ENCODE measurements at regions of chr13 and their contacts with region 1.

Region 1: GRCh38 chr13:23375001-23375971 is 58.2 kb downstream of the SACS start:
- DNase-seq: peak; percentile 86 to 96 (median 92)
- ATAC-seq: peak; percentile 95
- H3K4me3 ChIP-seq: peak overlapping the region; percentile 48
- H3K4me3 Mint-ChIP-seq: peak overlapping the region; percentile 71 to 82 (median 77)
- H3K27ac ChIP-seq: peak overlapping the region; percentile 75
- H3K27ac Mint-ChIP-seq: peak overlapping the region in 8 of 9 donors; percentile 44 to 94 (median 78)
- H3K4me1 ChIP-seq: peaks cover 21 to 26% of the 10 kb centered on the region in 2 donors
- H3K4me1 Mint-ChIP-seq: peaks cover 22 to 70% (median 67%) of the 10 kb centered on the region in 7 donors
- H3K27me3 ChIP-seq: no peaks in the 10 kb centered on the region
- H3K27me3 Mint-ChIP-seq: no peaks in the 10 kb centered on the region

Region 2: DNA sequence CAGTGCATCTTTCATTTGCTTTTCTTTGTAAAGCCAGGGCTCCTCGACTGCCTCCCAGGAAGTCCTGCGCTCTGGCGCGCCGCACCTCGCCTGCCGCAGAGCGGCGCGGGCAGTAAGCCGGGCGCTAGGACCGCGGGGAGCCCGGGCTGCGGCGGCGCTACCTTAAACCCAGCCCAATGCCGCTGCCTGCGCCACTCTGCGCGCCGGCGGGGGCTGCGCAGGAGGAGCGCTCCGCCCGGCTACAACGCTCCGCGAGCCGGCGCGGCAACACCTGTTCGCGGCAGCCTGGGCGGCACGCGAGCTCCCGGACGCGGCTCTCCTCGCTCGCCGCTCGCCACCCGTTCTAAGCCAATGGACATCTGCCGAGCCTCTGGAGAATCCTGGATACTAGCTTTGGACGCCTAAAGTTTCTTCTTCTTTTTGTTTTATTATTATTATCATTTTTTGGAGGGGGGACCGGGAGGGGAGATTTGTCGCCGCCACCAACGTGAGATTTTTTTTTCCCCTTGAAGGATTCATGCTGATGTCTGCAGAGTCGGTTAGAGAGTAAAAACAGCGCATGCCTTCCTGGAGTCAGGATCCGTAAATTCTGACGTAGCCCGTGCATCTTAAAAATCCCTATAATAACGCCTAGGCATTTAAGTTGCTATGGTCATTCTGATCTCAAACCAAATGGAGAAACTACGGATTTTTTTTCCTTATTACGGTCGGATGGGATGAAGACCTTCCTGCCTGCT is 1704.2 kb before region 1 on chr13 and contains the start of gene FGF9:
- CTCF ChIA-PET with region 1: no interaction called
- POLR2A ChIA-PET with region 1: no interaction called
- intact Hi-C with region 1: loop called in 1 of 2 experiments (anchors 2 kb)
- DNase-seq: peak; percentile 76 to 88 (median 86)
- ATAC-seq: peak; percentile 89
- H3K4me3 ChIP-seq: peak within 1 kb of the TSS; percentile 92
- H3K4me3 Mint-ChIP-seq: peak within 1 kb of the TSS; percentile 88 to 98 (median 93)
- H3K27ac ChIP-seq: peak within 1 kb of the TSS; percentile 48
- H3K27ac Mint-ChIP-seq: peak within 1 kb of the TSS; percentile 61 to 94 (median 78)
- H3K4me1 ChIP-seq: peaks cover 19 to 32% of the 10 kb centered on the region in 2 donors
- H3K4me1 Mint-ChIP-seq: peaks cover 27 to 45% (median 44%) of the 10 kb centered on the region in 7 donors
- H3K27me3 ChIP-seq: peaks cover 0 to 4% of the 10 kb centered on the region in 2 donors
- H3K27me3 Mint-ChIP-seq: peaks cover 5 to 77% (median 20%) of the 10 kb centered on the region in 5 donors
- total RNA-seq, gene FGF9: 0.19 to 5.6 (median 2.0) TPM

Region 3: DNA sequence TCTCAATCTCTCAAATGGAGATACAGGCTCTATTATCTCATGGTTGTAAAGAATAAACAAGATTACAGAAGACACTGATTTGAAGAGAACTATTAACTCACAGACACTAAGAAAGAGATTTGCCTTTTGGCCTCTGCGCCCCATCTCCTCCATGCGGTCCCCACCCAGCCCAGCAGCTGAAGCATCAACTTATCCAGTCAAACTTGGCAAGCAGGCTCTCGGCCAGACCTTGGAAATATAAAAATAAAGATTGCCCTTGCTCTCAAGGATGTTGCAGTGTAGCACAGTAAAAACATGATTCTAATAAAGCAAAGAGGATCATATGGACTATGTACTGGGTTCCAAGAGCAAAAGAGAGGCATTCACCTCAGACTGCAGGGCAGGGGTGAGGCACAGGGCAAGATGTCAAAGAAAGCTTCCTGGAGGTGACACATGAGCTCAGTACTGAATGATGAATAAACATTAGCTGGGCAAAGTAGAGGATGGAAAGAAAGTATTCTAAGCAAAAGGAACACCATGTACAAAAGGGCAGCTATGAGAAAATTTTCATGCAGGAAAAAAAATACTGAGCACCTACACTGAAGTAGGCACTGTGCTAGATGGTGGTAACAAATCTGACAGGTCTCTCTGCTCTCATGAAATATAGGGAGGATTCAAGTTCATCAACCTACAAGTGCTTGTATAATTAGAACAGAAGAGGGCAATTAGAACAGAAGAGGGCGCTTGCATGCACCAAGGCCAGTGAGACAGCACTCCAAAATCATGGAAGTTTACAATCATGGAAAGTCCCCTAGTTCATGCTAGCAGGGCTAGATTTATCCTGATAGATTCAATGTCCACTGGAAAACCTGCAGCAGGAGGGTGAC is 26.8 kb before region 1 on chr13:
- CTCF ChIA-PET with region 1: no interaction called
- POLR2A ChIA-PET with region 1: no interaction called
- intact Hi-C with region 1: no loop called
- DNase-seq: no peak
- ATAC-seq: no peak
- H3K4me3 ChIP-seq: no peak overlapping the region
- H3K4me3 Mint-ChIP-seq: no peak overlapping the region
- H3K27ac ChIP-seq: no peak overlapping the region
- H3K27ac Mint-ChIP-seq: no peak overlapping the region
- H3K4me1 ChIP-seq: no peaks in the 10 kb centered on the region
- H3K4me1 Mint-ChIP-seq: peaks cover 0 to 15% (median 7%) of the 10 kb centered on the region in 7 donors
- H3K27me3 ChIP-seq: no peaks in the 10 kb centered on the region
- H3K27me3 Mint-ChIP-seq: no peaks in the 10 kb centered on the region

Region 4: DNA sequence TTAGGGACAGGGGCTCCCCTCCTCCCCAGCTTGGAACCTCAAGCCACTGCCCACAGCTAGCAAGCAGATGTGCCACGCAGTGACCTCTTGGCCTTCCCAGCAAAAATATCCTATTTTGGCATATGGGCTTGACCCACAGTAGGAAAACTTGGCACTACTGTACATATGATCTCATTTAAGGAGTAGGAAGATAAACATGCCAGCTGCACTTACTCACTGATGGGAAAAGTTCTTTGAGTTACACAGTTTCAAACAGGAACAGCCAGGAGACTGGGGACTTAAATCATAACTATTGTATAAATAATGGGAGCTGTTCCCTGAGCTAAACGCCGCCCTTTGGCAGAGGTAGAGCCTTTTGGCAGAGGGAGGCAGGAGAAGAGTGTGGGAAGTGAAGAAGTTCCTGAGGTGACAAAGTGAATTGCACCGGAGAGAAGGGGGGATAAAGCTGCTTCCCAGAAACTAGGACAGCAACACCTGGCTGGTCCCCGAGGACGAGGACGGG is 52.1 kb after region 1 on chr13:
- CTCF ChIA-PET with region 1: no interaction called
- POLR2A ChIA-PET with region 1: no interaction called
- intact Hi-C with region 1: no loop called
- DNase-seq: no peak
- ATAC-seq: no peak
- H3K4me3 ChIP-seq: no peak overlapping the region
- H3K4me3 Mint-ChIP-seq: no peak overlapping the region
- H3K27ac ChIP-seq: no peak overlapping the region
- H3K27ac Mint-ChIP-seq: no peak overlapping the region
- H3K4me1 ChIP-seq: no peaks in the 10 kb centered on the region
- H3K4me1 Mint-ChIP-seq: no peaks in the 10 kb centered on the region
- H3K27me3 ChIP-seq: no peaks in the 10 kb centered on the region
- H3K27me3 Mint-ChIP-seq: peaks cover 10 to 29% (median 17%) of the 10 kb centered on the region in 5 donors

Region 5: DNA sequence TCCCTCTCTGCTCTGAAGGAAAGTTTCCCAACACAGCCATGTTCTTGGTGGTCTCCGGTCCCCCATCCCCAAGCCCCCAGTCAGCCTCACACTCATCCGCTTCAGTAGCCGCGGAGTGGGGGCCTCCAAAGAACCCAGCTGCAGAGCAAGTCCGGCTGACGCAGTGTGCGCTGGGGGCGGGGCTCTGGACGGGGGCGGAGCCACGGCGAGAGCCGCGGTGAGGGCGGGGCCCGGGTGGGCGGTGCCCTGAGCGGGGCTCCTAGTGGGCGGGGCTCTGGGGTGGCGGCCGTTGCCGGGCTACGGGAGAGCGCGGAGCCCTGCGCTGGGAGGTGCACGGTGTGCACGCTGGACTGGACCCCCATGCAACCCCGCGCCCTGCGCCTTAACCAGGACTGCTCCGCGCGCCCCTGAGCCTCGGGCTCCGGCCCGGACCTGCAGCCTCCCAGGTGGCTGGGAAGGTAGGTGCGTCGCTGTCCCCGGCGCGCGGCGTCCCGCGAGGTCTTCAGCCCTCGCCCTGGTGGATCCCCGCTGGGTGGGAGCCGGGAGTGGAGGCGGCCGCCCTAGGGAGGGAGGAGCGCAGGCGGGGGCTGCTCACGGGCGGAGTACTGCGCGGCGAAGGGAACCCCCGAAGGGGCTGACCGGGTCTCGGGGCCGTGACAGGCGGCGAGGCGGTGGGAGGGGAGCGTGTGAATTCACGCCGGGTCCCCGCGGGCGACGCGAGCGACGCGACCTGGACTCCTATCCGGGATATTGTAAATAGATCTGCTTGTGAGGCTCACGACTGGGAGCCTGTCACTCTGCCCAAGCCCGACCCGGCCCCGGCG is 204.0 kb after region 1 on chr13:
- CTCF ChIA-PET with region 1: no interaction called
- POLR2A ChIA-PET with region 1: no interaction called
- intact Hi-C with region 1: loop called (anchors 1 kb)
- DNase-seq: peak; percentile 76 to 96 (median 87)
- ATAC-seq: peak; percentile 99
- H3K4me3 ChIP-seq: peak overlapping the region; percentile 79
- H3K4me3 Mint-ChIP-seq: peak overlapping the region; percentile 43 to 89 (median 81)
- H3K27ac ChIP-seq: peak overlapping the region; percentile 67
- H3K27ac Mint-ChIP-seq: peak overlapping the region in 3 of 9 donors; percentile 46 to 80 (median 65)
- H3K4me1 ChIP-seq: peaks cover 0 to 4% of the 10 kb centered on the region in 2 donors
- H3K4me1 Mint-ChIP-seq: peaks cover 10 to 22% (median 18%) of the 10 kb centered on the region in 7 donors
- H3K27me3 ChIP-seq: peaks cover 0 to 11% of the 10 kb centered on the region in 2 donors
- H3K27me3 Mint-ChIP-seq: peaks cover 34 to 72% (median 46%) of the 10 kb centered on the region in 5 donors

Region 6: DNA sequence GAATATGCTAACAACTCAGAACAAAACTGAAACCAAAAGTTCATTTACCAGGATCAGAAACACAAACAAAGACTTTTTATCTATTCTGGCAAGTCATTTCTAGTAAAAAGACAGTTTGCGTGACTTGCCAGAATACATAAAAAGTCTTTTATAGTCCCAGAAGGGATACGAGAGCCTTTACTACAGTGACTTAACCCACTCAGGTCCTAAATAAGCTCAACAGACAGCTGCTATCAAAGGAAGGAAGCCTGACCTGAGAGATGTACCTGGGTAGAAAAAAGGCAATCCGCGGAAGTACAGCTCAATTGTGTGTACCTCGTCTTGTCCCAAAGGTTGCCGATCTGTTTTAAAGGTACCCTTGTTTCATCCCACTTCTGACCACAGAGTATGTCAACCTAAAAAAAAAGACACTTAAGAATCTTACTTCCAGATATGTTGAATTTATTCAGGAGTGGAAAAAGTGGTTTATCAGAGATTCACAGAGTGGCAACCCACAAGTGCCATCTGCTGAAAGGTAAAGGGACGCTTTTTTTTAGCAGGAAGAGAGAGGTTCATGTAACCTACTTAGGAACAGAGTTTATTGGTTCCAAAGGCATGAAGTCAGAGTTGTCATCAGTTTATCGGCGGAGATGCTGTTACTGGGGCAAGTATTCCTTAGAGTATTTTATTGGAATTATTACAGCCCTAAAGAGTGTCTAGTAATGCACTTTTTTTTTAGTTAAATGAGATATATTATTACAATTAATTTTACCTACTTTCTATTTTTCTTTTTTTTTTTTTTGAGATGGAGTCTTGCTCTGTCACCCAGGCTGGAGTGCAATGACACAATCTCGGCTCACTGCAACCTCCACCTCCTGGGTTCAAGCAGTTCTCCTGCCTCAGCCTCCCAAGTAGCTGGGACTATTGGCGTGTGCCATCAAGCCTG is 591.7 kb after region 1 on chr13:
- CTCF ChIA-PET with region 1: no interaction called
- POLR2A ChIA-PET with region 1: no interaction called
- intact Hi-C with region 1: loop called in 1 of 2 experiments (anchors 1 kb)
- DNase-seq: peak in 6 of 9 donors; percentile 19 to 58 (median 48)
- ATAC-seq: peak; percentile 79
- H3K4me3 ChIP-seq: peak overlapping the region; percentile 57
- H3K4me3 Mint-ChIP-seq: peak overlapping the region; percentile 65 to 88 (median 84)
- H3K27ac ChIP-seq: peak overlapping the region; percentile 52
- H3K27ac Mint-ChIP-seq: peak overlapping the region; percentile 18 to 93 (median 88)
- H3K4me1 ChIP-seq: peaks cover 6% of the 10 kb centered on the region in 2 donors
- H3K4me1 Mint-ChIP-seq: peaks cover 6 to 39% (median 18%) of the 10 kb centered on the region in 7 donors
- H3K27me3 ChIP-seq: no peaks in the 10 kb centered on the region
- H3K27me3 Mint-ChIP-seq: no peaks in the 10 kb centered on the region

Region 7: DNA sequence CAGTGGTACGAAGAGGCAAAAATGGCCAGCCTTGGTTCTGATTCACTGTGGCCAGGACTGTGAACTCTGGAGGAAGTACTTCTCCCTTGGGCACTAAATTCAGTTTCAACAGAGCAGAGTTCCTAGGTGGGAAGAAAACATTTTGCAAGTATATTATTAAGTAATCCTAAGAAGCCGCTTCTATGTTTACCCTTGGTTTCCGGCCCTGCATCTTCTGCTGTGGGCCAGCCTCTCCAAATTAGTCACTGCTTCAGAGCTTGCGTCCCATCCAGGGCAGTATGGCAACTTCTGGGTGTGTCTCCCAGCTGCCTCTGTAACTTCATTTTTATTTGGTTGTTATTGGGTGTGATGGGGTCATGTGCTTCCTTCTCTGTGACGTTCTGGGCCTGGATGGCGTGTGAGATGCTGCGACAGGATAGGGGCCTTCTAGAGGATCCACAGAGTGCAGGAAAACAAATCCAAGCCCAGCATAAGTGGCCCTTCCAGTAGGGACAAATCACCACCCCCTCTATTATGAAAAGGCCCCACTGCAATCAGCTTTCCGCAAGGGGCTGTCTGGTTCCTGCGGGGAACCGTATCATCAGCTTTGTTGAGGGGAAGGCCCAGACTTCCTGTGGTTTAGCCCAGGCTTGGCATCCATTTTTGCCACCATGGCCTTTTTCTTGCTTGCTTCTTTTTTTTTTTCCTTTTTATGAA is 879.0 kb after region 1 on chr13:
- CTCF ChIA-PET with region 1: no interaction called
- POLR2A ChIA-PET with region 1: no interaction called
- intact Hi-C with region 1: loop called (anchors 10 kb)
- DNase-seq: peak in 7 of 9 donors; percentile 59 to 80 (median 68)
- ATAC-seq: peak; percentile 76
- H3K4me3 ChIP-seq: peak overlapping the region; percentile 82
- H3K4me3 Mint-ChIP-seq: peak overlapping the region; percentile 86 to 96 (median 92)
- H3K27ac ChIP-seq: peak overlapping the region; percentile 90
- H3K27ac Mint-ChIP-seq: peak overlapping the region; percentile 86 to 99 (median 95)
- H3K4me1 ChIP-seq: peaks cover 58 to 75% of the 10 kb centered on the region in 2 donors
- H3K4me1 Mint-ChIP-seq: peaks cover 44 to 96% (median 91%) of the 10 kb centered on the region in 7 donors
- H3K27me3 ChIP-seq: no peaks in the 10 kb centered on the region
- H3K27me3 Mint-ChIP-seq: no peaks in the 10 kb centered on the region

Region 8: DNA sequence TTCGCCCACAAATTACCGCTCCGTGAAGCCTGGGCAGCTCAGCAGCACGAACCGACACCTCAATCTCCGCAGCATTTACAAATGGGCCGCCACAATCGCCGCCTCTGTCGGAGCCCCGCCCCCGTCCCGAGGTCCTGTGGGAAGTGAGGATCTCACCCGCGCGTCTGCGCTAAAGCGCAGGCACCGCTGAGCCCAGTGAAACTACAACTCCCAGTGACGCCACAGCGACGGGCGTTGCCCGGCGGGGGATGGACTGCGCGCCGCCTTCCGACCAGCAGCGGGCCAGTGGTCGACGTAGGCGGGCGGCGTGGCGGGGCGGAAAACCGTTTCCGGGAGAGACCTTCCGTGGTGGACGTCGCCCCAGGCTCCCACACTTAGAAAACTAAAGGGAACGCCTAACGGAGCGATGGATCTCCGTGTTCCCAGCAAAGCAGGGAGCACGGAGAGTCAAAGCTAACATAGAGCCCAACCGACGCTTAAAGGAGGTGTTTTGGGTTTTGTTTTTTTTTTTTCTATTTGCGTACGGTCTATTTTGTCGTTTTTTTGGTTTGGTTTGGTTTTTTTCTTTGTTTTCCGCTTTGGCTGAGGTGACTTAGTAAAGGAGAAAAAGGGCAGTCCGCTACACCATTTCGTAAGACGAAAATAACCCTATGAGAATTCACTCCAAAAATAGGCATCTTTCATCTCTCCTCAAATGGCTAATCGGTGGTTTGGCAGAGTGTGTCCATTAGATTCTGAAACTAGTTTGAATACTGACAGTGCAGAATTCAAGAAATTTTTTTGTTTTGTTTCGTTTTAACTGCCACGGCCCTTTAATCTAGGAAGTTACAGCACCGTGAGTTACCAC is 1547.7 kb after region 1 on chr13:
- CTCF ChIA-PET with region 1: no interaction called
- POLR2A ChIA-PET with region 1: no interaction called
- intact Hi-C with region 1: loop called (anchors 1 to 5 kb)
- DNase-seq: peak; percentile 79 to 93 (median 87)
- ATAC-seq: peak; percentile 100
- H3K4me3 ChIP-seq: peak overlapping the region; percentile 78
- H3K4me3 Mint-ChIP-seq: peak overlapping the region; percentile 89 to 100 (median 98)
- H3K27ac ChIP-seq: peak overlapping the region; percentile 71
- H3K27ac Mint-ChIP-seq: peak overlapping the region; percentile 73 to 95 (median 91)
- H3K4me1 ChIP-seq: no peaks in the 10 kb centered on the region
- H3K4me1 Mint-ChIP-seq: peaks cover 0 to 22% (median 14%) of the 10 kb centered on the region in 7 donors
- H3K27me3 ChIP-seq: no peaks in the 10 kb centered on the region
- H3K27me3 Mint-ChIP-seq: peaks cover 0 to 12% (median 0%) of the 10 kb centered on the region in 5 donors